HEK293T (cell line): ENCODE measurements at regions of chr4 and their contacts with region 1.

Region 1: DNA sequence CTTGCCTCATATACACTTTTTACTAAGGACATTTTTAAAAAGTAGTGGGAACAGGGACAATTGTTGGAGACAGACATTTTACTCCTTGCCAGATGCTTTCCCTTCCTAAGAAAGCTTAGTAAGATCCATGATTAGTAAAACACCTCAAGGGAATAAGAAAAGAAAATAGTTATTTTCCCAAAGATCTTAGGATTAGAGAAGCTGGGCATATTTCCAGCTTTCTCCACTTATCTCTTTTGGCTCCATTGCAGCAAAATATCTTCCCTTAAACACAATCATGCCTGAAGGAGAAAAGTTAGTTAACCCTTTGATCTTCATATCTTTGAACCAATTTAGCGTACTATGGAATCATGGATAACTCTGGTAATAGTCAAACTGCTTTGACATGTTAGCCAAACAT is 257.9 kb downstream of the PCDH18 start:
- DNase-seq: no peak

Region 2: GRCh38 chr4:137263206-137263605 is 11.2 kb before region 1 on chr4:
- CTCF ChIA-PET with region 1: no interaction called
- POLR2A ChIA-PET with region 1: no interaction called
- DNase-seq: no peak

Region 3: DNA sequence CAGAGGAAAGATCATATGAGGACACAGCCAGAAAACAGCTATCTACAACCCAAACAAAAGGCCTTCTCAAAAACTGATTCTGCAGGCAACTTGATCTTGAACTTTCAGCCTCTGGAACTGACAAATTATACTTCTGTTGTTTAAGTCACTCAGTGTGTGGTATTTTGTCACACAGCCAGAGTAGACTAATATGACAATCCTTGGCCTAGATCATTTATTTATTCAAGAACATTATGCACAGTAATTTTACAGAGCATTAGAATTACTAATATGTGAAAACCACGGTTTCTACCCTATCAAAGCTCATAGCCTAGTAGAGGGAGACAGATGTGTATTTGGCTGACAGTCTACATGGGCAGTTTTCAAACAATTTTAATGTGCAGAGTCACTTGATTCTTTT is 425.7 kb after region 1 on chr4:
- CTCF ChIA-PET with region 1: interaction called, 11 read pairs
- POLR2A ChIA-PET with region 1: no interaction called
- DNase-seq: no peak